ENCODE measurements at regions of chr9 and their contacts with region 1.

Region 1: GRCh38 chr9:131307974-131308373 is 18.5 kb downstream of the PLPP7 start:
- DNase-seq: no peak
- ATAC-seq: no peak
- H3K4me3 ChIP-seq: no peak overlapping the region
- H3K4me3 Mint-ChIP-seq: no peak overlapping the region
- H3K27ac ChIP-seq: no peak overlapping the region
- H3K27ac Mint-ChIP-seq: no peak overlapping the region
- H3K4me1 ChIP-seq: peaks cover 5 to 7% of the 10 kb centered on the region in 2 donors
- H3K4me1 Mint-ChIP-seq: peaks cover 8% of the 10 kb centered on the region
- H3K27me3 ChIP-seq: peaks cover 0 to 5% (median 0%) of the 10 kb centered on the region in 4 experiments
- H3K27me3 Mint-ChIP-seq: peaks cover 5% of the 10 kb centered on the region
- CTCF ChIP-seq: no peak

Region 2: DNA sequence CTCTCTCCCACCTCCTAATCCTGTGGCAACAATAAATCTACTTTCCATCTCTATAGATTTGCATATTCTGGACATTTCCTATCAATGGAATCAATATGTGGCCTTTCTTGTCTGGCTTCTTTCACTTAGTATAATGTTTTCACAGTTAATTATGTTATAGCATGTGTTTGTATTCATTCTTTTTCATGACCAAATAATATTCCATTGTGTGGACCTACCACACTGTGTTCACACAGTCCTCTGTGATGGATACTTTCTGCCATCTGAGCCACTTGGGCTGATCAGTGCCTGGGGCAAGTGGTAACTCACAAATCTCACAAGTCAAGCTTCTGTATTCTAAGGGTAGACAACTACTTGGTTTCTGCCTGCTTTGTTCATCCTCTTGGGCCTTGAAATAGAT is 146.1 kb after region 1 on chr9:
- CTCF ChIA-PET with region 1: no interaction called
- POLR2A ChIA-PET with region 1: interaction called, 13 read pairs
- intact Hi-C with region 1: no loop called
- DNase-seq: no peak
- ATAC-seq: no peak
- H3K4me3 ChIP-seq: no peak overlapping the region
- H3K4me3 Mint-ChIP-seq: no peak overlapping the region
- H3K27ac ChIP-seq: no peak overlapping the region
- H3K27ac Mint-ChIP-seq: no peak overlapping the region
- H3K4me1 ChIP-seq: no peaks in the 10 kb centered on the region
- H3K4me1 Mint-ChIP-seq: no peaks in the 10 kb centered on the region
- H3K27me3 ChIP-seq: no peaks in the 10 kb centered on the region
- H3K27me3 Mint-ChIP-seq: no peaks in the 10 kb centered on the region
- CTCF ChIP-seq: no peak